GM12878 (cell line): ENCODE measurements at regions of chr7 and their contacts with region 1.

Region 1: DNA sequence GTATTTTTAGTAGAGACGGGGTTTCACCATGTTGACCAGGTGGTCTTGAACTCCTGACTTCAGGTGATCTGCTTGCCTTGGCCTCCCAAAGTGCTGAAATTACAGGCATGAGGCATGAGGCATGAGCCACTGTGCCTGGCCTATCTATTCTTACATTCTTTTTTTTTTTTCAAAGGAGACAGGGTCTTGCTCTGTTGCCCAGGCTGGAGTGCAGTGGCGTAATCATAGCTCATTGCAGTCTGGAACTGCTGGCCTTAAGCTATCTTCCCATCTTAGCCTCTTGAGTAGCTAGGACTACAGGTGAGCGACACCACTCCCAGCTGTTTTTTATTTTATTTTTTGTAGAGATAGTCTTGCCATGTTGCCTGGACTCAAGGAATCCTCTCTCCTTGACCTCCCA is 20.5 kb downstream of the RSBN1L start:
- DNase-seq: no peak
- ATAC-seq: no peak
- H3K4me3 ChIP-seq: no peak overlapping the region
- H3K27ac ChIP-seq: no peak overlapping the region
- H3K4me1 ChIP-seq: no peaks in the 10 kb centered on the region
- H3K27me3 ChIP-seq: no peaks in the 10 kb centered on the region
- CTCF ChIP-seq: no peak
- EP300 ChIP-seq: no peak
- POLR2A ChIP-seq: no peak
- RAD21 ChIP-seq: no peak

Region 2: GRCh38 chr7:77269360-77270093 is 447.3 kb before region 1 on chr7:
- CTCF ChIA-PET with region 1: no interaction called
- POLR2A ChIA-PET with region 1: no interaction called
- RAD21 ChIA-PET with region 1: no interaction called
- SMC1A ChIA-PET with region 1: no interaction called
- in situ Hi-C with region 1: no loop called
- intact Hi-C with region 1: no loop called
- DNase-seq: peak; percentile 23
- ATAC-seq: peak; percentile 79
- H3K4me3 ChIP-seq: no peak overlapping the region
- H3K27ac ChIP-seq: no peak overlapping the region
- H3K4me1 ChIP-seq: peaks cover 19% of the 10 kb centered on the region
- H3K27me3 ChIP-seq: no peaks in the 10 kb centered on the region
- CTCF ChIP-seq: no peak
- EP300 ChIP-seq: no peak
- POLR2A ChIP-seq: no peak
- RAD21 ChIP-seq: no peak

Region 3: DNA sequence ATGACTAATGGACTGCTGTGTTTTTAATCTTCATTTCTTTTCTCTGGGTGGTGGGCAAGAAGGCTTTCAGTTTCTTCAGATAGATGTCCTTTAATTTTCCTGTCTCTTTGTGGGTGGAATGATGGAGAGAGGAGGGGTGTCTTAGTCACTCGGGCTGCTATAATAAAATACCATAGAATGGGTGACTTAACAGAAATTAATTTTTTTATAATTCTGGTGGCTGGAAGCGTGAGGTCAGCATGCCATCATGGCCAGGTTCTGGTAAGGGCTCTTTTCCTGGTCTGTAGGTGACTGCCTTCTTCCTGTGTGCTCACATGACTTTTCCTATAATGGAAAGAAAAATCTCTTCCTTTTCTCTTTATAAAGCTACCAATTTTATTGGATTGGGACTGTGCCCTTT is 14.3 kb before region 1 on chr7:
- CTCF ChIA-PET with region 1: interaction called, 5 read pairs
- POLR2A ChIA-PET with region 1: interaction called, 5 read pairs
- RAD21 ChIA-PET with region 1: no interaction called
- SMC1A ChIA-PET with region 1: interaction called, 10 read pairs
- in situ Hi-C with region 1: no loop called
- intact Hi-C with region 1: no loop called
- DNase-seq: no peak
- ATAC-seq: no peak
- H3K4me3 ChIP-seq: no peak overlapping the region; the same call in 1 of the 2 replicates
- H3K27ac ChIP-seq: peak overlapping the region; percentile 18; the same call in 1 of the 2 replicates
- H3K4me1 ChIP-seq: peaks cover 6% of the 10 kb centered on the region
- H3K27me3 ChIP-seq: no peaks in the 10 kb centered on the region
- CTCF ChIP-seq: no peak
- EP300 ChIP-seq: no peak
- POLR2A ChIP-seq: no peak
- RAD21 ChIP-seq: no peak

Region 4: GRCh38 chr7:77940647-77941046 is 223.8 kb after region 1 on chr7:
- CTCF ChIA-PET with region 1: no interaction called
- POLR2A ChIA-PET with region 1: no interaction called
- RAD21 ChIA-PET with region 1: no interaction called
- SMC1A ChIA-PET with region 1: no interaction called
- in situ Hi-C with region 1: no loop called
- intact Hi-C with region 1: no loop called
- DNase-seq: no peak
- ATAC-seq: peak; percentile 75
- H3K4me3 ChIP-seq: no peak overlapping the region
- H3K27ac ChIP-seq: no peak overlapping the region
- H3K4me1 ChIP-seq: no peaks in the 10 kb centered on the region
- H3K27me3 ChIP-seq: no peaks in the 10 kb centered on the region
- CTCF ChIP-seq: peak; percentile 44 to 66 (median 53); a peak in 5 of 6 replicates
- EP300 ChIP-seq: no peak
- POLR2A ChIP-seq: no peak
- RAD21 ChIP-seq: peak; percentile 73